IMR-90 (cell line): ENCODE measurements at regions of chr11 and their contacts with region 1.

Region 1: GRCh38 chr11:123188508-123189165 is 6.4 kb downstream of the CLMP start:
- DNase-seq: peak; percentile 99
- ATAC-seq: peak; percentile 75
- H3K4me3 ChIP-seq: peak overlapping the region; percentile 8; the same call in 1 of the 2 replicates
- H3K27ac ChIP-seq: peak overlapping the region; percentile 97
- H3K4me1 ChIP-seq: peaks cover 42% of the 10 kb centered on the region
- H3K27me3 ChIP-seq: no peaks in the 10 kb centered on the region
- CTCF ChIP-seq: no peak
- POLR2A ChIP-seq: no peak; the same call in 1 of the 2 replicates
- RAD21 ChIP-seq: no peak

Region 2: DNA sequence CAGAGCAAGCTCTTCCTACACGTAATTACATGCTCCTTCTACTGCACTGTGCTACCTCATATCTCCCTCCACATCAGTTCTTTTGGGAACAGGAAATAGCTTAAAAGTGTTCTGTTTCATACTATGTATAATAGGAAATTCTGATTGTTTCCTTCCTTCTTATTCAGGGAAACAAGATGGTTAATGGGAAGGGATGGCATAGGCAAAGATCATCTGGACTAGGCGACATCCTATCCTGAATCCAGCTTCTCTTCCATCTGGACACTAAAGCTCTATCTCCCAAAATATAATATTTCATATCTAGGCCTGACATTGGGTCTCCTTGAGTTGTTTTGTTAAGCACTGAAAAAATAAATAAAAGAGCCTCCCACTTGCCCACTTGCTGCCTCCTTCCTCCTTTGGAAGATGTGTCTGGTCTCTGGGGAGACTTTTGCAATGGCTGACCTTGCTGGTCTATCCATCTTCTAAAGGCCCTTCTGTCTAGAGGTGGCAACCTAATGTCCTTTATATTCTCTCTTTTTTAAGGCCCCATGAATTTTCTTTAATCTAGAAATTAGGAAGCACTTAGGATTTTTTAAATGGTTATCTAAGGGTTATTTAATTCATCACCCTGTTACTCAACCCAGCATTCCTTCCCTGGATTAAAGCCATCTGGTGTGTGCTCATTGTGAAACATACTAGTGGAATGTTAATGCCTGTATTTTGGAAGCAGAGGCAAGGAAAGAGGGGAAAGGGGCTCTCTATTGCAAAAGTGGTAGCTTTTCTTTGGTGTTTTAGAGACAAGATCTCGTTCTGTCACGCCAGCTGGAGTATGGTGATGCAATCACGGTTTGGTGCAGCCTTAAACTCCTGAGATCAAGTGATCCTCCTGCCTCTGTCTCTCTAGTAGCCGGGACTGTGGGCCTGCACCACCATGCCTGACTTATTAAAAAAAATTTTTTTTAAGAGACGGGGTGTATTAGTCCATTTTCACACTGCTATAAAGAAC is 14.1 kb before region 1 on chr11:
- CTCF ChIA-PET with region 1: interaction called, 8 read pairs
- POLR2A ChIA-PET with region 1: interaction called, 3 read pairs
- dilution Hi-C with region 1: no loop called
- in situ Hi-C with region 1: no loop called
- intact Hi-C with region 1: loop called (anchors 1 kb)
- DNase-seq: peak; percentile 99
- ATAC-seq: peak; percentile 62
- H3K4me3 ChIP-seq: no peak overlapping the region
- H3K27ac ChIP-seq: peak overlapping the region; percentile 97
- H3K4me1 ChIP-seq: peaks cover 23% of the 10 kb centered on the region
- H3K27me3 ChIP-seq: no peaks in the 10 kb centered on the region
- CTCF ChIP-seq: no peak
- POLR2A ChIP-seq: 0 out of 2 replicates have a peak, but pooled peaks have one; percentile 2
- RAD21 ChIP-seq: 0 out of 2 replicates have a peak, but pooled peaks have one; percentile 16